Colonic mucosa (tissue), 4 donors: ENCODE measurements at regions of chr11 and their contacts with region 1.

Region 1: DNA sequence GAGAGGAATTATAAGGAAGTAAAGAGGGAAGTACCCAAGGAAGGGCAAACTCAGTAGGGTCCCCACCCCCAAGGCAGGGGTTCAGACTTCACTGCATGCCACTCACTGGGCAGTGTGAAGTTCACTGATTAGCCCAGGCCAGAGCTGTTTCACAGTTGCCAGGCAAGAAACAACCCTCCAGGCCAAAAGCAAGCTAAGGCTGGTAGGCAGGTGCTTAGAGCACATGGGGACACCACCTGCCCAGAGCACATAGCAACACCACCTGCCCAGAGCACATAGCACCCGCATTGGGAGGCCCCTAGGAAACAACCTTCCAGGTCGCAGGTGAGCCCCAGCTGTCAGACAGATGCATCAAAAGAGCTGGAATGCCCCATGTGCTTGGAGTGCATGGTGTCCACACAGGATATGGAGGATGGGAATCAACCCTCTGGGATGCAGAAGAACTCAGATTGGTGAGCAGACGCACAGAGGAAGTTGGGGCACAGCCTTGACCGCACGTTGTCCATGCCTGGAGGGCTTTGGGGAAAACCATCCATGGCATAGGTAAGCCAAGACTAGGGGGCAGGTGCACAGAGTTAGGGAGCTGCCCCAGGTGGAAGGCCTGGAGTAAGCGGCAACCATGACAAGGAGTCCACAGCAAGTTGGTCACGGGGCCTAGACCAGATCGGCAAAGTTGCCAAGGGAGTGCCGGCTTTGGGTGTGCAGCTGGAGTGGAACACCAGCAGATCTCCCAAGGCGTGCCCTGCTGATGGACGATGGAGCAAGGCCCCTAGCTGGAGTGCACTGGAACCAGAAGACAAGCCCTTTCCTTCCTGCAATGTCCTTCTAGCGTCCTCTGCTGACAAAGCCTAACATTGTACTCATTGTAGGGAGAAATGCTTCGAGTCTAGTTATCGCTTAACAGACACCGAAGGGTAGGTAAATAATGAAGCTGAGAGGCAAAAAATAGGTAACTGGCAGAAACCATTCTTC is 7.8 kb upstream of the TMEM216 start:
- DNase-seq: no peak
- H3K4me3 ChIP-seq: no peak overlapping the region
- H3K27ac ChIP-seq: no peak overlapping the region
- H3K4me1 ChIP-seq: no peaks in the 10 kb centered on the region
- H3K27me3 ChIP-seq: no peaks in the 10 kb centered on the region
- CTCF ChIP-seq: no peak

Region 2: DNA sequence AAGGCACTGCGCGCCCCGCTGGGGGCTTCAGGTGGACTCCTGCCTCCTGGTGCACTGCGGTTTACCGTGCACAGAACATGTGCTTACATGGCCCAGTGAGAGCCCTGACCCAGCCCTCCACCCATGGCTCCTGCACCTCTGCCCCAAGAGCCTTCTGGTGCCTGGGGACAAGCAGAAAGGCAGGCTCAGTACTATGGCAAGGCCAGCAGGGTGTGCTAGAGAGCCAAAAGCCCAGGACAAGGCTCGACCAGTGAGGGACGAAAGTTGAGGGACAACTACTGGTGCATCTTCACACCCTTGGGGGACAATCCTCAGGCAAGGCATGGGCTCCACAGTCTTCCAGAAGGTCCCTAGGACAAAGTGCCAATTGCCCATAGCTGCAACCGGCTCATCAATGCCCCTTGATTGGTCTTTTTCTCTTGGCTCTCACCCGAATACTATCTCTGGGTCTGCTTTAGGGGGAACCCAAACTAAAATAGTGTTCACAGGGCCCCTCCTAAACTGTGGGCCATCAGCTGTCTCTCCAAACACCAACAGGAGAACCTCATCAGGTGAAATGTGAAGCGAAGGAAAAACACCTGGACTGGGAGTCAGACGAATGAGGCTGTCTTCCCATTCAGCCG is 130.0 kb before region 1 on chr11:
- intact Hi-C with region 1: loop called (anchors 10 kb)
- DNase-seq: peak; percentile 68
- H3K4me3 ChIP-seq: no peak overlapping the region
- H3K27ac ChIP-seq: no peak overlapping the region
- H3K4me1 ChIP-seq: no peaks in the 10 kb centered on the region
- H3K27me3 ChIP-seq: no peaks in the 10 kb centered on the region
- CTCF ChIP-seq: peak; percentile 84

Region 3: DNA sequence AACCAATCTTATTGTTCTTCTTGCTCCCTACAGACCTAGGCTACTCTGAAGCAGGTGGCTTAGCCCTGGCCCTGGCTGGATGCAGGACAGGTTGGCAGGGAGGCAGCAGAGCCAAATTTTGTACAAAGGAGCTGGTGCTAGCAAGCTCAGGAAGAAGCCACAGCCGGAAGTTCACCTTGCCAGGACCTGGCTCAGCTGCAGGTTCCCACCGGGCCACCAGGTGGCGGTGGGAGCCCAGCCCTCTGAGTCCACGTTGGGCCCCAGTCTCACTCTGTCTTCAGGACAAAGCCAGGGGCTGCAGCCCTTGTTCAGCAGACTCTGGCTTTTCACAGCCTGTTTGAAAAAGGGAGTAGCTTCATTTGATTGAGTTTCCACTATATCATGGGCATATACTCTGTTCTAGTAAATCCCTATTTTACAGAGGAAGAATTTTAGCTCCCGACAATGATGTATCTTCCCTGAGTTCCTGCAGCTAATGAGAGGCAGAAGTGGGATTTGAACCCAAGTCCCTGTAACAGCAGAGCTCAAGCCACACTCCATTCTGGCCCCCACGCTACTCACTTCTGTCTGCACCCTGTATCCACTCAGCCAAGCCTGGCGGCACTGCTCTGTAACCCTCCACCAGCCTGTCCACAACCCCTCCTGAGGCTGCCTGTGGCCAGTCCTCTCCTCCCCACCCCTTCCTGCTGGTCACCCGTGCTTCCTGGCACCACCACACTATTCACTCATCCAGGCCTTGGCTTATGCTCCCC is 48.2 kb before region 1 on chr11:
- intact Hi-C with region 1: loop called (anchors 1 kb)
- DNase-seq: peak; percentile 84
- H3K4me3 ChIP-seq: no peak overlapping the region
- H3K27ac ChIP-seq: peak overlapping the region; percentile 73
- H3K4me1 ChIP-seq: peaks cover 7% of the 10 kb centered on the region
- H3K27me3 ChIP-seq: no peaks in the 10 kb centered on the region
- CTCF ChIP-seq: peak; percentile 100